Mammary epithelial cell (primary cell): ENCODE measurements at regions of chr11 and their contacts with region 1.

Region 1: GRCh38 chr11:355581-356458 is 13.5 kb upstream of the B4GALNT4 start:
- DNase-seq: peak; percentile 65
- H3K4me3 ChIP-seq: peak overlapping the region in 2 of 3 experiments; percentile 37 to 56
- H3K27ac ChIP-seq: peak overlapping the region; percentile 65
- H3K4me1 ChIP-seq: peaks cover 21% of the 10 kb centered on the region
- H3K27me3 ChIP-seq: no peaks in the 10 kb centered on the region
- CTCF ChIP-seq: no peak

Region 2: DNA sequence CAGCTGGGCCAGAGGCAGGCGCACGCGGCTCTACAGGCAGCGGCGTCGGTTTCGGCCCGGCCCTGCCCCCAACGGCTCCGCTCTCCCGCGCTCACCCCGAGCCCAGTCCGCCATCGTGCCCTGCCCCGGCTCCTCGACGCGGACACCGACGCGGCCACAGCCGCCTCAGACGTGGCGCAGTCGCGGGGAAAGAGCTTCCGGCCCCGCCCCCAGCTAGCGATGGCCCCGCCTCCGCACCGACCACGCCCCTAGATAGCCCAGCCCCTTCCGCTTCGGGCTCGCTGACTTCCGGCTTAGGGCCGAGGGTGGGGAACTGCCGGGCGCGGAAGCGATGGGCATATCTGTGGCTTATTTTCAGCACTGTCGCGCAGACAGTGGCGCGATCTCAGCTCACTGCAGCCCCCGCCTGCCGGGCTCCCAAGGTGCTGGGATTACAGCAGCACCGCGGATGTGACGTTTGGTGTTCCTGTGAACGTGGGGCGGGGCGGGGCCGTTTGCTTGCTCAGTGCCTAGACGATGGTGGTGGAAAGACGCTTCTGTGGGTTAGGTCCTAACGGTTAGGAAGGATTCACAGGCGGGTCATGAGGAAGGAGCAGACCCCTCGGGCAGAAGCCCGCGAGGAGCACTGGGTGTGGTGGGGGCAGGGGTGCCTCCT is 148.5 kb before region 1 on chr11 and contains the starts of genes BET1L and RIC8A:
- CTCF ChIA-PET with region 1: no interaction called
- dilution Hi-C with region 1: no loop called
- in situ Hi-C with region 1: no loop called
- intact Hi-C with region 1: loop called (anchors 5 kb)
- DNase-seq: peak; percentile 98
- H3K4me3 ChIP-seq: peak within 1 kb of the TSS; percentile 68 to 92 (median 74)
- H3K27ac ChIP-seq: peak within 1 kb of the TSS; percentile 90
- H3K4me1 ChIP-seq: peaks cover 22% of the 10 kb centered on the region
- H3K27me3 ChIP-seq: no peaks in the 10 kb centered on the region
- CTCF ChIP-seq: no peak
- total RNA-seq, gene BET1L: 13.5 to 53.8 TPM
- total RNA-seq, gene RIC8A: 112 to 132 TPM

Region 3: GRCh38 chr11:250740-251299 is 105.0 kb before region 1 on chr11:
- CTCF ChIA-PET with region 1: no interaction called
- dilution Hi-C with region 1: loop called (anchors 5 kb)
- in situ Hi-C with region 1: no loop called
- intact Hi-C with region 1: loop called (anchors 5 kb)
- DNase-seq: peak; percentile 11
- H3K4me3 ChIP-seq: no peak overlapping the region
- H3K27ac ChIP-seq: no peak overlapping the region
- H3K4me1 ChIP-seq: no peaks in the 10 kb centered on the region
- H3K27me3 ChIP-seq: no peaks in the 10 kb centered on the region
- CTCF ChIP-seq: peak; percentile 56 to 62

Region 4: DNA sequence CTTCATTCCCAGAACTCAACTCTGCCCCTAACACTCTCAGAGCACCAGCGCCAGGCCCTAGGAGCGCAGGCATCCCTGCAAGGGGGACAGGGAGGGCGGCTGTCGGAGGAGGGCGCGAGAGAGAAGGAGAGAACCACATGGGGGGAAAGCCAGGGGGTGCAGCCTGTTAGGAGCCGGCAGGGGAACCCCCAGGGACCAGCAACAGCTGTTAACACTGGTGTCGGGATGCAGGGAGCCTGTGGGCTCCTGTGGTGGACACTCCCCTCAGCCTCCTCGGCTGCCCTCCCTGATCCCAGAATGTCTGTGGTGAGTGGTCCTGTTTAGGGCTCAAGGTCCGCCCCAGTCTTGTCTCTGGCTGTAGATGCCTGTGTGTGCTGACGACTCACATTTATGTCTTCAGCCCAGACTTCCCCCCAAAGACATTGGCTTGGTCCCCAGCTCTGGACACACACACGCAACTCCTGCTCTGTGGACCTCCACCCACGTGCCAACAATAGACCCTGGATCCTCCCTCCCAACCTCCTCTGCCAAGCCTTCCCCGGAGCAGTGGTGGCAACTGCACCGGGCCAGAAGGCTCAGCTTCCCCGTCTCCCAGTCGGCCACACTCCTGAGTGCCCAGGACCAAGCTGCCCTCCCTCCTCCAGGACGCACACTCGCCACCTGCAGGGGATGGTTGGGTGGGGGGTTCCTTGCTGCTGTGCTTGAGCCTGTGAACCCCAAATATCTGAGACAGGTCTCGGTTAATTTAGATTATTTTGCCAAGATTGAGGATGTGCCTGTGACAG is 55.7 kb before region 1 on chr11:
- CTCF ChIA-PET with region 1: no interaction called
- dilution Hi-C with region 1: loop called (anchors 5 kb)
- in situ Hi-C with region 1: loop called in 1 of 2 experiments (anchors 10 kb)
- intact Hi-C with region 1: loop called (anchors 1 kb)
- DNase-seq: no peak
- H3K4me3 ChIP-seq: no peak overlapping the region
- H3K27ac ChIP-seq: no peak overlapping the region
- H3K4me1 ChIP-seq: no peaks in the 10 kb centered on the region
- H3K27me3 ChIP-seq: peaks cover 2% of the 10 kb centered on the region
- CTCF ChIP-seq: no peak

Region 5: GRCh38 chr11:313787-314547 is 41.9 kb before region 1 on chr11 and contains the start of gene IFITM1:
- CTCF ChIA-PET with region 1: interaction called, 3 read pairs
- dilution Hi-C with region 1: no loop called
- in situ Hi-C with region 1: loop called (anchors 5 to 10 kb)
- intact Hi-C with region 1: no loop called
- DNase-seq: peak; percentile 33
- H3K4me3 ChIP-seq: peak within 1 kb of the TSS in 1 of 3 experiments; percentile 11
- H3K27ac ChIP-seq: no peak within 1 kb of the TSS
- H3K4me1 ChIP-seq: no peaks in the 10 kb centered on the region
- H3K27me3 ChIP-seq: peaks cover 1% of the 10 kb centered on the region
- CTCF ChIP-seq: no peak
- total RNA-seq, gene IFITM1: 1.7 to 2.8 TPM